ENCODE measurements at regions of chr1 and their contacts with region 1.

Region 1: DNA sequence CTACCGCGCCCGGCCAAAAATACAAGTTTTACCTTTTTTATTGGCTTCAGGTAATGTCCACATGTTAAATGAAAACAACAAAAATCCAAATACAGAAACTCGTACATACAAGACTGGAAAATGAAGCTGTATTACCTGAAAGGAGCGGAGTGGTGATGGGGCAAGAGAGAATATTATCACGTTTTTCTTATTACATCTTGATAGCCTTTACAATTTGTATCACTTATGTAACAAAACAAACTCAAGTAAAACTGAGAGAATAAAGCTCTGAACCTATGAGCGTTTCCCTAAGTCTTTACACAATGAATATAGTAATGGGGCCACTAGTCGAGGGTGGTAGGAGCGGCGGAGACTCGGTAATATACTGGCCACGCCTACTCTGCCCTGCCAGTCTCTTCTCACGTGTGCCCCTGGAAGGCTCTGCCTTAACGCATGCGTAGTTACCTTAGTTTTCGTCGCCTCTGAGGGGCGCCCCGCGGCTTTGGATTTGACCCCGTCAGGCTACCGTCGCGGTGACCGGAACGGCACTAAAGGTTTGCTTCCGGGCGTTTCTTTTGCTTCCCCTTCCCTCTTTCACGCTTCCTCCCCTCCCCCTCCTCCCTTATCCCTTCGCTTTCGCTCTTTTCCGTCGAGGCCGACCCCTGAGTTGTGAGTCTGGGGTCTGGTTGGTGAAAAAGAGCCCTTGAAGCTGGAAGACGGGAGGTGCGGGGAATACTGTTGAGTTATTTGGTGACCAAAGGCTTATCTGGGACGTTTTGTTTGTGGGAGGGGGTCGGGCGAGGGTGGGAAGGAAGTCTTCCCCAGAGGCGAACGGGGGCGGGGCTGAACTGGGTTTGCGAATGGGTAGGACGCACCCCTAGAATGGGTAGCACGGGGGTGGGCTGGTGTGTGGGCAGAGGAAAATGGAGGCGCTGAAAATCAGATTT is at the start of gene SETDB1:
- DNase-seq: peak; percentile 95 to 97
- H3K4me3 ChIP-seq: peak within 1 kb of the TSS; percentile 79 to 81
- H3K27ac ChIP-seq: peak within 1 kb of the TSS; percentile 80 to 81
- H3K4me1 ChIP-seq: peaks cover 0 to 20% (median 9%) of the 10 kb centered on the region in 4 donors
- H3K27me3 ChIP-seq: no peaks in the 10 kb centered on the region
- CTCF ChIP-seq: no peak

Region 2: GRCh38 chr1:150829743-150830142 is 96.3 kb before region 1 on chr1:
- intact Hi-C with region 1: loop called (anchors 10 kb)
- DNase-seq: no peak
- H3K4me3 ChIP-seq: no peak overlapping the region
- H3K27ac ChIP-seq: no peak overlapping the region
- H3K4me1 ChIP-seq: no peaks in the 10 kb centered on the region
- H3K27me3 ChIP-seq: no peaks in the 10 kb centered on the region
- CTCF ChIP-seq: peak in 1 of 2 experiments; percentile 22

Region 3: DNA sequence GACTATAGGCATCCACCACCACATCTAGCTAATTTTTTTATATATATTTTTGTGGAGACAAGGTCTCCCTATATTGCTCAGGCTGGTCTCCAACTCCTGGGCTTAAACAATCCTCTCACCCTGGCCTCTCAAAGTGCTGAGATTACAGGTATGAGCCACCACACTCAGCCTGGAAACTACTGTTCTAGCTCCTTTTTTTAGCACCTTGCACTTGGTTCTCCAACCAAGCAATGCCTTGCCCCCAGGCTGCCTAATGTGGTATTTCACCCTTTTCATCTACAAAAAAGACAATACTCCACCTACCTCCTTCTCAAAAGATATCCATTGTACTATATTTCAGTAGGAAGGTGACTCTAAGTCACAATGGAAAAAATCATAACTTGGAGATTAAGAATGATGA is 56.4 kb before region 1 on chr1:
- intact Hi-C with region 1: no loop called
- DNase-seq: no peak
- H3K4me3 ChIP-seq: no peak overlapping the region
- H3K27ac ChIP-seq: no peak overlapping the region
- H3K4me1 ChIP-seq: peaks cover 0 to 23% (median 12%) of the 10 kb centered on the region in 4 donors
- H3K27me3 ChIP-seq: no peaks in the 10 kb centered on the region
- CTCF ChIP-seq: no peak

Region 4: DNA sequence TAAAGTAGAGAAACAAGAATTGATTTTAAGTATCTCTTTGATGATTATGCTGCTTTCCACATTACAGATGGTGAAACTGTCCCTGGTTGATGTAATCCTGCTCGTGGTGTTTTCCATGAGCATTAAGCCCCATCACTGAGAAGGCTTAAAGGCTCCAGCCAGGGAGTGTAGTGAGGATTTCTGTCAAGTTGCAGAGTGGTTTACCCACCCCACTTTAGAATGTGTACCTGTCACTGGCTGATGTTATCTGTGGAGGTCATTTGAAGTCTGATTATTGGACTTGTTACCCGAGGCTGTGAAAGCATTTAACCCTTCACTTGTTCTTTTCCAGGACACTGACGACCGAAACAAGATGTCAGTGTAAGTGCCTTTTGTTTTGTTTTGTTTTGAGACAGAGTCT is 35.7 kb after region 1 on chr1:
- intact Hi-C with region 1: loop called (anchors 1 kb)
- DNase-seq: no peak
- H3K4me3 ChIP-seq: no peak overlapping the region
- H3K27ac ChIP-seq: no peak overlapping the region
- H3K4me1 ChIP-seq: no peaks in the 10 kb centered on the region
- H3K27me3 ChIP-seq: no peaks in the 10 kb centered on the region
- CTCF ChIP-seq: no peak

Measured in tibial artery (tissue), 4 donors.